CD8-positive, alpha-beta T cell (primary cell): ENCODE measurements at regions of chr2 and their contacts with region 1.

Region 1: GRCh38 chr2:174341286-174341994 is 6.7 kb downstream of the SP9 start:
- DNase-seq: peak; percentile 79 to 92 (median 87)
- ATAC-seq: peak; percentile 70
- H3K4me3 ChIP-seq: no peak overlapping the region
- H3K4me3 Mint-ChIP-seq: peak overlapping the region; percentile 69
- H3K27ac ChIP-seq: no peak overlapping the region
- H3K27ac Mint-ChIP-seq: no peak overlapping the region
- H3K4me1 ChIP-seq: peaks cover 49% of the 10 kb centered on the region
- H3K4me1 Mint-ChIP-seq: peaks cover 36% of the 10 kb centered on the region
- H3K27me3 ChIP-seq: peaks cover 63 to 76% of the 10 kb centered on the region in 2 experiments
- H3K27me3 Mint-ChIP-seq: peaks cover 59% of the 10 kb centered on the region
- CTCF ChIP-seq: peak; percentile 98

Region 2: DNA sequence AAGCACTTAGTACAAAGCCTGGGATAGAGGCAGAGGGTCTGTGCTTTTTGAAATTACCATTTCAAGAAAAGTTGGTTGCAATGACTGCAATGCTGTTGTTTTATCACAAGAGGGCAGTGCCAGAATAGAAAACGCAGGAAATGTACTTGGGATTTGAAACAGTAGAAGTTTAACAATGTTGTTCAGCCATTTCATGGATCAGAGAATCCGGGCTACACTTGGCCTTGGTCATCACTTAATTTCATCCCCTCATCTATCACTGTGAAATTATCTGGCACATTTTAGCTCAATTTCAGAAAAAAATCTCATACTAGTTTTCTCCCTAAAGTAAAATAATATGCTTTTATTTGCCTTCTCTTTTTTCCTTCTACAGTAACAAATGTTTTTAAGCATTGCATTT is 1534.9 kb before region 1 on chr2:
- CTCF ChIA-PET with region 1: no interaction called
- POLR2A ChIA-PET with region 1: no interaction called
- intact Hi-C with region 1: loop called in 1 of 2 experiments (anchors 2 kb)
- DNase-seq: peak in 2 of 9 experiments; percentile 19 to 38
- ATAC-seq: no peak
- H3K4me3 ChIP-seq: no peak overlapping the region
- H3K4me3 Mint-ChIP-seq: no peak overlapping the region
- H3K27ac ChIP-seq: no peak overlapping the region
- H3K27ac Mint-ChIP-seq: no peak overlapping the region
- H3K4me1 ChIP-seq: no peaks in the 10 kb centered on the region
- H3K4me1 Mint-ChIP-seq: peaks cover 2% of the 10 kb centered on the region
- H3K27me3 ChIP-seq: peaks cover 0 to 4% of the 10 kb centered on the region in 2 experiments
- H3K27me3 Mint-ChIP-seq: no peaks in the 10 kb centered on the region
- CTCF ChIP-seq: peak; percentile 82

Region 3: GRCh38 chr2:173043476-173043875 is 1298.0 kb before region 1 on chr2:
- CTCF ChIA-PET with region 1: no interaction called
- POLR2A ChIA-PET with region 1: no interaction called
- intact Hi-C with region 1: no loop called
- DNase-seq: peak in 1 of 9 experiments; percentile 28
- ATAC-seq: no peak
- H3K4me3 ChIP-seq: no peak overlapping the region
- H3K4me3 Mint-ChIP-seq: no peak overlapping the region
- H3K27ac ChIP-seq: no peak overlapping the region
- H3K27ac Mint-ChIP-seq: no peak overlapping the region
- H3K4me1 ChIP-seq: no peaks in the 10 kb centered on the region
- H3K4me1 Mint-ChIP-seq: no peaks in the 10 kb centered on the region
- H3K27me3 ChIP-seq: no peaks in the 10 kb centered on the region
- H3K27me3 Mint-ChIP-seq: no peaks in the 10 kb centered on the region
- CTCF ChIP-seq: no peak

Region 4: DNA sequence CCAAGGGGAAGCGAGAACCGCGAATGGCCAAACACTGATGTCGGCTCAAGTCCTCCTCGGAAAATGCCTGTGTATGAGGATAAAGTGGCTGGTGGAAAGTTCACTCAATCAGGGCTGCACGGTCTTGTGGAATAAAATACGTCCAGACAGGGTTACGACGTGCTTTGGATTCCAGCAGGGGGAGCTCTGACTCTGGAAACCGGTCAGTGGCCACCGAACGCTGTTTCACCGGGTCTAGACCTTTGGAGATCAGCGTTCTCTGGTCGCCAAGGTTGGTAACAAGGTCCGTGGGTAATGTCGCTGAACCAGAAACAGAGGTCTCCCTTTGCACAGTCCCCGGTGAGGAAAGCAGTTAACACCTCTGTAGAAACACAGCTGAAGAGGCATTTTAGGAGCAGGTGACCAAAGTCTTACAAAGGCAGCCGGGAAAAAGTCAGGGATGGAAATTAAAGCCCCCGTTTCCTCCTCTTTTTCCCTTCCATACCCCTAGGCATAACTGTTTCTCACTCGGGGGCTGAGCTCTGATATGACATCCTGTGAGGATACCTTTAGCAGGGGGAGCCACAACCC is 939.0 kb before region 1 on chr2:
- CTCF ChIA-PET with region 1: interaction called, 48 read pairs
- POLR2A ChIA-PET with region 1: no interaction called
- intact Hi-C with region 1: loop called (anchors 1 kb)
- DNase-seq: peak; percentile 48 to 84 (median 72)
- ATAC-seq: peak; percentile 70
- H3K4me3 ChIP-seq: no peak overlapping the region
- H3K4me3 Mint-ChIP-seq: no peak overlapping the region
- H3K27ac ChIP-seq: no peak overlapping the region
- H3K27ac Mint-ChIP-seq: no peak overlapping the region
- H3K4me1 ChIP-seq: no peaks in the 10 kb centered on the region
- H3K4me1 Mint-ChIP-seq: peaks cover 4% of the 10 kb centered on the region
- H3K27me3 ChIP-seq: peaks cover 5 to 10% of the 10 kb centered on the region in 2 experiments
- H3K27me3 Mint-ChIP-seq: peaks cover 49% of the 10 kb centered on the region
- CTCF ChIP-seq: peak; percentile 68

Region 5: GRCh38 chr2:173955004-173955403 is 386.4 kb before region 1 on chr2:
- CTCF ChIA-PET with region 1: no interaction called
- POLR2A ChIA-PET with region 1: no interaction called
- intact Hi-C with region 1: loop called in 1 of 2 experiments (anchors 5 kb)
- DNase-seq: peak in 2 of 9 experiments; percentile 28 to 42
- ATAC-seq: no peak
- H3K4me3 ChIP-seq: no peak overlapping the region
- H3K4me3 Mint-ChIP-seq: peak overlapping the region; percentile 0
- H3K27ac ChIP-seq: no peak overlapping the region
- H3K27ac Mint-ChIP-seq: no peak overlapping the region
- H3K4me1 ChIP-seq: peaks cover 88% of the 10 kb centered on the region
- H3K4me1 Mint-ChIP-seq: peaks cover 90% of the 10 kb centered on the region
- H3K27me3 ChIP-seq: no peaks in the 10 kb centered on the region
- H3K27me3 Mint-ChIP-seq: no peaks in the 10 kb centered on the region
- CTCF ChIP-seq: no peak

Region 6: DNA sequence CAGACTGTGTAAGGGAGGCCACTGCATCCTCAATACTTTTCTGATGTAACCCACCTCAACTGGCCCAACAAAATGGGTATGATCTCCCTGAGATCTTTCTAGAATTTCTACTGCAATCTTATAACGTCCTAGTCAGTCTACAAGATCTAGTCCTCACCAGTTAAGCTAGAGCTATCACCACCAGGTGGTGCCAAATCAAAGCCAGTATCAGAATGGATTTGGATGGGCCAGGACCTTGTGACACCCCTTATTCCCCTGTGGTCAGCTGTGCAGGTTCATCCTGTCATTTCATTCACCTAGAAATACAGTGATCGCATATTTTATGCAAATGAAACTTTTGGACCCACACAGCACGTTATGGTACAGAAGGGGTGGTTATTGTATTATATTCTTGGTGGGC is 183.4 kb before region 1 on chr2:
- CTCF ChIA-PET with region 1: interaction called, 7 read pairs
- POLR2A ChIA-PET with region 1: no interaction called
- intact Hi-C with region 1: loop called (anchors 1 to 2 kb)
- DNase-seq: peak in 7 of 9 experiments; percentile 2 to 48 (median 20)
- ATAC-seq: peak; percentile 36
- H3K4me3 ChIP-seq: no peak overlapping the region
- H3K4me3 Mint-ChIP-seq: no peak overlapping the region
- H3K27ac ChIP-seq: no peak overlapping the region
- H3K27ac Mint-ChIP-seq: no peak overlapping the region
- H3K4me1 ChIP-seq: no peaks in the 10 kb centered on the region
- H3K4me1 Mint-ChIP-seq: peaks cover 4% of the 10 kb centered on the region
- H3K27me3 ChIP-seq: no peaks in the 10 kb centered on the region
- H3K27me3 Mint-ChIP-seq: no peaks in the 10 kb centered on the region
- CTCF ChIP-seq: no peak

Region 7: GRCh38 chr2:176001916-176002687 is 1660.7 kb after region 1 on chr2 and contains the start of gene LNPK:
- CTCF ChIA-PET with region 1: no interaction called
- POLR2A ChIA-PET with region 1: no interaction called
- intact Hi-C with region 1: loop called in 1 of 2 experiments (anchors 10 kb)
- DNase-seq: peak; percentile 84 to 95 (median 92)
- ATAC-seq: peak; percentile 88
- H3K4me3 ChIP-seq: peak within 1 kb of the TSS; percentile 69 to 79
- H3K4me3 Mint-ChIP-seq: peak within 1 kb of the TSS; percentile 90
- H3K27ac ChIP-seq: peak within 1 kb of the TSS; percentile 63 to 71
- H3K27ac Mint-ChIP-seq: peak within 1 kb of the TSS; percentile 97
- H3K4me1 ChIP-seq: peaks cover 10% of the 10 kb centered on the region
- H3K4me1 Mint-ChIP-seq: peaks cover 31% of the 10 kb centered on the region
- H3K27me3 ChIP-seq: no peaks in the 10 kb centered on the region
- H3K27me3 Mint-ChIP-seq: no peaks in the 10 kb centered on the region
- CTCF ChIP-seq: no peak
- total RNA-seq, gene LNPK: 16.9 TPM